HCT116 (cell line): ENCODE measurements at regions of chr19 and their contacts with region 1.

Region 1: DNA sequence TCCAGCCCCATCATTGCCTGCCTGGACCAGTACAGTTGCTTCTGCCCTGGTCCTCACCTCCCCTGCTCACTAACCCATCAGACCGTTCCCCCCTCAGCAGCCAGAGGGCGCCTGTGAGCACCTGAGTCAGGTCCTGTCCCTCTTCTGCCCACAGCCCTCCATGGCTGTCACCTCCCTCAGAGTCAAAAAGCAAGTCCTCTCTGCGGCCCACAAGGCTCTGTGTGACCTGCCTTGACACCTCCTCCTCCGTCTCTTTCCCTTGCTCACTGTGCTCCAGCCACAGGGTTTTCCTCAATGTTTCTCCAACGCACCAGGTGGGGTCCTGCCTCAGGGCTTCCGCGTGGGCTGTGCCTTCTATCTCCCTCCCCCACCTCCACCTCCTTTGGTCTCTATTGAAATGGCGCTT is 29.4 kb upstream of the PTPRS start:
- DNase-seq: no peak
- ATAC-seq: peak; percentile 99
- H3K4me3 ChIP-seq: no peak overlapping the region
- H3K27ac ChIP-seq: no peak overlapping the region
- H3K4me1 ChIP-seq: no peaks in the 10 kb centered on the region
- H3K27me3 ChIP-seq: peaks cover 4% of the 10 kb centered on the region; the same call in 1 of the 2 replicates
- CTCF ChIP-seq: peak; percentile 52 to 92 (median 82); a peak in 5 of 6 replicates
- POLR2A ChIP-seq: no peak
- RAD21 ChIP-seq: peak; percentile 50

Region 2: DNA sequence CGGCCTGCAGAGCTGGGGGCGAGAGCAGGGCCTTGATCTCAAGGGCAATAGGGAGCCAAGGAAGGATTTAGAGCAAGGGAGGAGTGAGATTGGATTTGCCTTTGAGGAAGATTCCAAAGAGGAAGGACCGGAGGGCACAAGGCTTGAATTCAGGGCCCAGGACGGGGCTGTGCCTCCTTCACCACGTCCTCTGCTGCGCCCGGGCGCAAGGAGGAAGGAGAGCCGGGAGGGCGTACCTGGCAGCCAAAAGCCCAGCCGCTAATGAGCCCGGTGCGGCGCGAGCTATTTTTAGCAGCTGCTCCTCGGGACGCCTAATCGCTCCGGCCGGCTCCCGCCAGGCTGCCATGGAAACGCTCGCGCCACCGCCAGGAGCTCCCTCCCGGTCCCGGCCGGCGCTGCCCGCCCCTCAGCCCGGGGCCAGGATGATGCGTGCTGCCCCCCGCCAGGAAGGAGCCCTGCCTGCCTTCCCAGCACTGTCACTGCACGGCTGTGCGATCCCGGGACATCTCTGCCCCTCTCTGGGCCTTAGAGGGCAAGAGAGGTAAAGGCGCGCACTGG is 166.5 kb after region 1 on chr19:
- CTCF ChIA-PET with region 1: no interaction called
- POLR2A ChIA-PET with region 1: no interaction called
- RAD21 ChIA-PET with region 1: no interaction called
- intact Hi-C with region 1: loop called (anchors 10 kb)
- DNase-seq: peak; percentile 51
- ATAC-seq: peak; percentile 72
- H3K4me3 ChIP-seq: peak overlapping the region; percentile 48 to 66
- H3K27ac ChIP-seq: peak overlapping the region; percentile 80
- H3K4me1 ChIP-seq: peaks cover 19 to 26% of the 10 kb centered on the region in 2 experiments
- H3K27me3 ChIP-seq: no peaks in the 10 kb centered on the region
- CTCF ChIP-seq: no peak
- POLR2A ChIP-seq: no peak
- RAD21 ChIP-seq: no peak